ENCODE measurements at regions of chr19 and their contacts with region 1.

Region 1: DNA sequence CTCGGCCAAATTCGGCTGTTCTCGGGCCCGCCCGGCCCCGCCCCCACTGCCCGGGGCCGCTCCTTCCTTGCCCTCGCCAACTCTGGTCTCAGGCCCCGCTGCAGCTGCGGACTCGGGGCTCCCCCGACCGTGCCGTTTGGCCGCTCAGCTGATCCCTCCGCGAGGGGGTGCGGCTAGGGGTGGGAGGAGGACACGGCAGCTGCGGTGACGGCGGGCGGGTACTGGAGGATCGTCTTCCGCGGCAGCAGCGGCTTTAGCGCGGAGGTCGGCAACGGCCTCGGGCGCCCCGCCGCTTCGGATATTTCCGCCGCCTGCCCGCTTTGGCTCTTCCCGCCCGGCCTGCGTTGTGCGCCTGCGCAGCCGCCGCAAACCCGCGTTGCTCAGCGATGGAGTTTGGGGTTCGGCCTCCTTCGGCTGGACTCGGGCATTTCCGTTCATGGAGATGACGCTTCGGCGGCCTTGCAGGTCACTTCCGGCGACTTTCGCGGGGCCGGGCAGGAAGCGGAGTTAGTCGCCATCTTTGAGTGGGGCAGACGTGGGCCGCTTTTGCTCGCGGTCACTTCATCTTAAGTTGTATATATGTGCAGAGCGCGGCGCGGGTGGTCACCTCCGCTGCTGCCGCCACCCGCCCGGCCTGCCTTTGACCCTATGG is 338 bp upstream of the UBE2M start:
- DNase-seq: peak; percentile 97
- H3K4me3 ChIP-seq: peak overlapping the region; percentile 70 to 88 (median 81)
- H3K27ac ChIP-seq: peak overlapping the region; percentile 91
- H3K4me1 ChIP-seq: peaks cover 50% of the 10 kb centered on the region
- H3K27me3 ChIP-seq: no peaks in the 10 kb centered on the region
- CTCF ChIP-seq: no peak

Region 2: DNA sequence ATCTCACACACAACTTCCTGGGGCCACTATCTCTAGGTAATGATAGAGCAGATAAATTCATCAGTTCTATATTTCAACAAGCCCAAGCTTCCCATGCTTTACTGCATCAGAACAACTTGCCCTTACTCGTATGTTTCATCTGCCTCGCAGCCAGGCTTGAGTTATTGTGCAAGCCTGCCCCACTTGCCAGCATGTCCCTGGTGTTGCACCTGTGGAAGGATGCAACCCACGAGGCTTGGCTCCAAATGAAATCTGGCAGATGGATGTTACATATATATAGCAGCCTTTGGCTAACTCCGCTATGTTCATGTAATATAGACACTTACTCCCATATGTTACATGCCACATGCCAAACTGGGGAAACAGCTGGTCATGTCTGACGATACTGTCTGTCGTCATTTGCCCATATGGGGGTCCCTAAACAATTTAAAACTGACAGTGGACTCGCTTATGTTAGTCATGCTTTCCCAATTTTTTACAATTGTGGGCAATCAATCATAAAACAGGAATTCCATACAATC is 247.3 kb before region 1 on chr19:
- CTCF ChIA-PET with region 1: no interaction called
- dilution Hi-C with region 1: no loop called
- in situ Hi-C with region 1: no loop called
- intact Hi-C with region 1: no loop called
- DNase-seq: no peak
- H3K4me3 ChIP-seq: no peak overlapping the region
- H3K27ac ChIP-seq: no peak overlapping the region
- H3K4me1 ChIP-seq: no peaks in the 10 kb centered on the region
- H3K27me3 ChIP-seq: no peaks in the 10 kb centered on the region
- CTCF ChIP-seq: no peak

Region 3: GRCh38 chr19:58460039-58460438 is 98.7 kb before region 1 on chr19:
- CTCF ChIA-PET with region 1: no interaction called
- dilution Hi-C with region 1: no loop called
- in situ Hi-C with region 1: no loop called
- intact Hi-C with region 1: no loop called
- DNase-seq: peak; percentile 73
- H3K4me3 ChIP-seq: no peak overlapping the region
- H3K27ac ChIP-seq: no peak overlapping the region
- H3K4me1 ChIP-seq: peaks cover 9% of the 10 kb centered on the region
- H3K27me3 ChIP-seq: no peaks in the 10 kb centered on the region
- CTCF ChIP-seq: no peak

Region 4: DNA sequence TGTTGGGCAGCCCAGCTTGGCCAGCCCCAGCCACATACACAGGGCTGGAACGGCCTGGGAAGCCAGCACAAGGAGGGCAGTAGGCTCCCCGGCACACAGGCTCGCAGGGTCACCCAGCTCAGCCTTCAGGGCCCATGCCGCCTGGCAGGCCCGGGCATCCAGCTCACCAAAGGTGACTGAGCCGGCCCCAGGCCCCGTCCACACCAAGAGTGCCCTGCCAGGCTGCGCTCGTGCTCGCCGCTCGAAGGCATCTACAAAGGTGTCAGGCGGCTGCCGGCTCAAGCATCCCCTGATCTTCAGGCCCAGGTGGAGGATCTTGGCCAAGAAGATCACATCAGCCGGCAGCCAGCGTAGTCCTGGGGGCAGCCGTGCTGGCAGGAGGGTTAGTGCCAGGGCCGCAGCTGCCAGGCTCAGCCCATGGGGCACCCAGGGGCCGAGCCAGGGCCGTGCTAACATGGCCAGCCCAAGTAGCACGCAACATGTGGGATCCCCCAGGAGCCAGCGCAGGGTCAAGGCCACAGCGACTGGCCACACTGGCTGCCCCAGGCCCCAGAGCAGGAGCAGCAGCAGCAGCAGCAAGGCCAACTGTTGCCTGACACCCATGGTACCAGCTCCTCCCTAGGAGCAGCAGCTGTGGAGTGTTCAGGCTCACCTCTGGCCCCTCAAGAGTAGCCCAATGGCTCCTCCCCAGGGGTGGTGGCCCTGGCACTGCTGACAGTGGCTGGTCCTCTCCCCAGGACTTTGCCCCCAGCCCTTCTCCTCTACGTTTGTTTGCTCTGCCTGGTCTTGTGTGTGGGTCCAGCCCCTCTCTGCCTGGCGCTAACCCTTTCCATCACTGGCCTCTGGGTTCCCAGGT is 47.2 kb before region 1 on chr19 and contains the start of gene SLC27A5:
- CTCF ChIA-PET with region 1: no interaction called
- dilution Hi-C with region 1: no loop called
- in situ Hi-C with region 1: no loop called
- intact Hi-C with region 1: no loop called
- DNase-seq: no peak
- H3K4me3 ChIP-seq: no peak within 1 kb of the TSS
- H3K27ac ChIP-seq: no peak within 1 kb of the TSS
- H3K4me1 ChIP-seq: no peaks in the 10 kb centered on the region
- H3K27me3 ChIP-seq: no peaks in the 10 kb centered on the region
- CTCF ChIP-seq: no peak
- total RNA-seq, gene SLC27A5: 4.5 to 12.6 TPM

Region 5: DNA sequence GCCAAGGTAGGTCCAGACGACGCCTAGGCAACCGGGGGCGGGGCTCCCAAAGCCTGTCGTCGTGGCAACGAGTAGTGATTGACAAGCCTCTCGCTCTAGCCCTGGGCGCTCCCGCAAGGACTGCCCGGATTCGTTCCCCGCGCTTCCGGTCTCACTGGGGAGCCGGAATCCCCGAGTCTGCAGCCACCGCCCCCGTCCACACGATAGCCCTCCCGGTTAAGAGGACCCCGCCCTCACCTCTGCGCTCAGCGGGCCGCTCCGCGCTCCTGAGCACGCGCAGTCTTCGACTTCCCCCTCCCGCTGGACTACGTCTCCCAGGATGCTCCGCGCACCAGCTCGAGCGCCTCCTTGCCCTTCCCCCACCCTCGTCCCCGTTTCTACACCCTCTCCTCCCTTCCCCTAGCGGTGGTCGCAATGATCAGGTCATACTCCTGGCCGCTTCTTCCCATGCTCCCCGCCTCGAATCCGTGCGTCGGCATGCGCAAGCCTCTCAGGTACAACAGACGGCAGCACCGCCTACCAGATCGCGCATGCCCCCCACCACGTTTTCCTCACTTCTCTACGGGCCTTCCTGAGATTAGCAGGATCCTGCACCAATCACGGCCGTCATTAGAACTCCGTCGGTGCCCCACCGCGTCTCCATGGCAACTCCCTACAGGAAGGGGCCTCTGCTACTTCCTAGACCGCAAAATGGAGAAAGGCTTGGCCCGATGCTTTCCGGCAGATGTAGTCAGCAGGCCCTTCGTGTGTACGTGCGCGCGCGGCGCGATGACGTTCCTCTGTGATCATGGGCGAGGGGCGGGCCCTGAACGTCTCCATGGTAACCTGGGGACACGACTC is 14.3 kb after region 1 on chr19 and contains the start of gene MZF1:
- CTCF ChIA-PET with region 1: no interaction called
- dilution Hi-C with region 1: no loop called
- in situ Hi-C with region 1: no loop called
- intact Hi-C with region 1: loop called (anchors 1 kb)
- DNase-seq: peak; percentile 100
- H3K4me3 ChIP-seq: peak within 1 kb of the TSS; percentile 66 to 99 (median 85)
- H3K27ac ChIP-seq: peak within 1 kb of the TSS; percentile 99
- H3K4me1 ChIP-seq: peaks cover 14% of the 10 kb centered on the region
- H3K27me3 ChIP-seq: no peaks in the 10 kb centered on the region
- CTCF ChIP-seq: peak in 1 of 2 donors; percentile 16
- total RNA-seq, gene MZF1: 16.7 to 21.5 TPM

Region 6: DNA sequence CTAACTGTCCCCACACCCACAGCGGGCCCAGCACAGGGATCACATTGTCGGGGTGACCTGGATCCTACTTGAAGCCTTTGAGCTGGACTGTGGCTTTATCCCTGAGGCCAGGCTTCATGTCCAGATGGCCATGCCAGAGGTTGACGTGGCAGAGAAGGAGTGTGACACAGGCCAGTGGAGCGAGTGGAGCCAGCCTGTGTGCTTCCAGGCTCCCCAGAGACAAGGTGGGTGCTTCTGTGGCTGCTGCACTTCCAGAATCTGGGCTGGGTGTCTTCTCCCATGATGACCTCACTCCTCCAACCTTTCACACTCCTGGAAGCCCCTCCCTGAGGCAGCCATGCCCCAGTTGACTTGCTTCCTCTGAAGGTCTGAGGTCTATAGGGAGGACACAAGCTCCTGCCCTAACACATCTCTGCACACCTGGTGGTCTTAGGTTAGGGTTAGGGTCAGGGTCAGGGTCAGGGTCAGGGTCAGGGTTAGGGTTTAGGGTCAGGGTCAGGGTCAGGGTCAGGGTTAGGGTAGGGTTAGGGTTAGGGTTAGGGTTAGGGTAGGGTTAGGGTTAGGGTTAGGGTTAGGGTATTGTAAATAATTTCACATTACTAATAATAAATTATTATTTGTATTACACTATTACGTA is 27.5 kb after region 1 on chr19:
- CTCF ChIA-PET with region 1: no interaction called
- dilution Hi-C with region 1: no loop called
- in situ Hi-C with region 1: no loop called
- intact Hi-C with region 1: no loop called
- DNase-seq: no peak
- H3K4me3 ChIP-seq: no peak overlapping the region
- H3K27ac ChIP-seq: no peak overlapping the region
- H3K4me1 ChIP-seq: no peaks in the 10 kb centered on the region
- H3K27me3 ChIP-seq: no peaks in the 10 kb centered on the region
- CTCF ChIP-seq: no peak